K562 (cell line): ENCODE measurements at regions of chr19 and their contacts with region 1.

Region 1: GRCh38 chr19:38618590-38619360 is at the start of gene EIF3K:
- DNase-seq: peak; percentile 98 to 99 (median 98)
- ATAC-seq: peak; percentile 92
- H3K4me3 ChIP-seq: peak within 1 kb of the TSS; percentile 93
- H3K27ac ChIP-seq: peak within 1 kb of the TSS; percentile 94
- H3K4me1 ChIP-seq: peaks cover 13 to 29% of the 10 kb centered on the region in 2 experiments; a peak in 4 of 5 replicates
- H3K27me3 ChIP-seq: no peaks in the 10 kb centered on the region
- CTCF ChIP-seq: no peak
- EP300 ChIP-seq: no peak
- POLR2A ChIP-seq: peak; percentile 98
- RAD21 ChIP-seq: 0 out of 4 replicates have a peak, but pooled peaks of 1 of the 2 experiments have one; percentile 8
- polyA plus RNA-seq, gene EIF3K: 1,193 to 1,486 TPM

Region 2: GRCh38 chr19:38229585-38230073 is 389.1 kb before region 1 on chr19:
- CTCF ChIA-PET with region 1: no interaction called
- POLR2A ChIA-PET with region 1: no interaction called
- in situ Hi-C with region 1: loop called (anchors 10 kb)
- intact Hi-C with region 1: no loop called
- DNase-seq: peak; percentile 94 to 99 (median 98)
- ATAC-seq: peak; percentile 97
- H3K4me3 ChIP-seq: no peak overlapping the region; the same call in 1 of the 2 replicates
- H3K27ac ChIP-seq: no peak overlapping the region
- H3K4me1 ChIP-seq: peaks cover 4 to 37% of the 10 kb centered on the region in 2 experiments; a peak in 4 of 5 replicates
- H3K27me3 ChIP-seq: peaks cover 2 to 6% of the 10 kb centered on the region in 2 experiments; a peak in 2 of 5 replicates
- CTCF ChIP-seq: 0 out of 6 replicates have a peak, but pooled peaks of 1 of the 3 experiments have one; percentile 14
- EP300 ChIP-seq: no peak
- POLR2A ChIP-seq: no peak
- RAD21 ChIP-seq: no peak